Activated CD8-positive, alpha-beta T cell treated with anti-CD3 and anti-CD28 coated beads for 36 hours (primary cell): ENCODE measurements at regions of chr22 and their contacts with region 1.

Region 1: GRCh38 chr22:42614312-42615091 is at the start of gene POLDIP3:
- DNase-seq: peak; percentile 99
- ATAC-seq: peak; percentile 75
- H3K4me3 Mint-ChIP-seq: peak within 1 kb of the TSS; percentile 91
- H3K27ac Mint-ChIP-seq: peak within 1 kb of the TSS; percentile 100
- H3K4me1 Mint-ChIP-seq: peaks cover 49% of the 10 kb centered on the region
- H3K27me3 Mint-ChIP-seq: no peaks in the 10 kb centered on the region
- CTCF ChIP-seq: no peak
- total RNA-seq, gene POLDIP3: 70.2 to 71.1 TPM

Region 2: DNA sequence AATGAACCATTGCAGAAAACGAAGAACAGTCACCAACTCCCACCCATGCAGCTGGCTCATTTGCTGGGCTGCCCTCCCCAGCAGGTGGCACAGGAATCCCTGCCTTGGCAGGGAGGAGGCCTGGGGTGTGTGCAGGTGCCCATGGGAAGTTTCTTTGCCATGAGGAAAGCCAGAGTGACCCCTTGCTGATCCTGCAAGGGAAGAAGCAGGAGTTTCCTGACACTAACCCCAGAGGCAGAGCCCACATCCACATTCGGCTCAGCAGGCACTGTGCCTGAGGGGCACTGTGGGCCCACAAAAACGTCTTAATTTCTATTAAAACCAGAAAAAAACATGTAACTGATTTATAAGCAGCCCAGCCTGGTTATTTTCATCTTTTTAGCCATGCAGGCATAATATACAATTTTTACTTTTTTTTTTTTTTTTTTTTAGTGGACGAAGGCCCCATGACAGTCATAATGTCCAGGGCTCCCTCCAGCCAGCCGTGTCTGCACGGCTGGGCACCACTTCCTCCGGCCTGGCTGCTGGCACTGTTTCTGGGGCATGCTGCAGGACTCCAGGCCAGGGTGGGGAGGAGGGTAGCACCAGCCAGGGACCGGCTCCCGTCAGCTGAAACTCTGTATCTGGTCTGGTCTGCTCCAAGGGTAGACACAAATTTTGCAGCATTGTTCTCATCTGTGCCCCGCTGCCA is 86.1 kb before region 1 on chr22:
- CTCF ChIA-PET with region 1: no interaction called
- POLR2A ChIA-PET with region 1: no interaction called
- intact Hi-C with region 1: no loop called
- DNase-seq: no peak
- ATAC-seq: peak; percentile 10
- H3K4me3 Mint-ChIP-seq: no peak overlapping the region
- H3K27ac Mint-ChIP-seq: peak overlapping the region; percentile 8
- H3K4me1 Mint-ChIP-seq: peaks cover 18% of the 10 kb centered on the region
- H3K27me3 Mint-ChIP-seq: no peaks in the 10 kb centered on the region
- CTCF ChIP-seq: no peak

Region 3: GRCh38 chr22:42581762-42582716 is 32.5 kb before region 1 on chr22:
- CTCF ChIA-PET with region 1: interaction called, 4 read pairs
- POLR2A ChIA-PET with region 1: interaction called, 102 read pairs
- intact Hi-C with region 1: no loop called
- DNase-seq: peak; percentile 91
- ATAC-seq: peak; percentile 92
- H3K4me3 Mint-ChIP-seq: peak overlapping the region; percentile 95
- H3K27ac Mint-ChIP-seq: peak overlapping the region; percentile 95
- H3K4me1 Mint-ChIP-seq: peaks cover 9% of the 10 kb centered on the region
- H3K27me3 Mint-ChIP-seq: no peaks in the 10 kb centered on the region
- CTCF ChIP-seq: no peak

Region 4: DNA sequence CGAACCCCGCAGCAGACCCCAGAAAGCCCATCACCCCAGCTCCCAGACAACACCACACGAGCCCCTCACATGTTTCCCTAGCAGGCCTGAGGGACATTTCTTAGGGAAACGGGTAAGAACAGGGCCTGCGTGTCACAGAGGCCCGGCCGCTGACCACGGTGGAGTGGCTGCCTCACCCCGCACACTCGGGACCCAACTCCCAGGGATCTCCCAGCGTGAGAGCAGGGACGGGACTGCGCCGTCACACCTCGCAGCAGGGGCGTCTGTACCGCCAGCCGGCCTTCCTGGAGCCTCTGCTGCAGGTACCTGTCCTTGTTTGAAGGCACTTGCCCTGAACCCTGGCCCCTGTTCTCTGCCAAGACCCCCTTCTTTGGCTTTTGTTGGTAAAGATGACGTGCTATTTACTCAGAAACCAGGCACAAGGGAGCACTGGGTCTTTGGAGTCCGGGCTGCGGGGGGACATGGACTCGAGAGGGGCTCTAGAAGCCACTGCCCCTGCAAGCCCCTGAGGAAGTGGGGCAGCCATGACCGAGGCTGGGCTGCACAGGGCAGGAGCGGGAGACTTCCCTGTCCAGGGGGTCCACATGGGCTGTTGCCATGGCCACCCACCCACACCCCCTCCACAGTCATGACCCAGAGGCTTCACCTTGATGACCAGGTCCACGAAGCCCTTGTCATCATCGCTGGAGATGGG is 15.9 kb after region 1 on chr22:
- CTCF ChIA-PET with region 1: interaction called, 5 read pairs
- POLR2A ChIA-PET with region 1: interaction called, 64 read pairs
- intact Hi-C with region 1: no loop called
- DNase-seq: no peak
- ATAC-seq: no peak
- H3K4me3 Mint-ChIP-seq: no peak overlapping the region
- H3K27ac Mint-ChIP-seq: no peak overlapping the region
- H3K4me1 Mint-ChIP-seq: peaks cover under 1% of the 10 kb centered on the region
- H3K27me3 Mint-ChIP-seq: no peaks in the 10 kb centered on the region
- CTCF ChIP-seq: no peak

Region 5: GRCh38 chr22:42649246-42650099 is 35.0 kb after region 1 on chr22 and contains the start of gene CYB5R3:
- CTCF ChIA-PET with region 1: no interaction called
- POLR2A ChIA-PET with region 1: interaction called, 64 read pairs
- intact Hi-C with region 1: no loop called
- DNase-seq: peak; percentile 85
- ATAC-seq: peak; percentile 88
- H3K4me3 Mint-ChIP-seq: peak within 1 kb of the TSS; percentile 95
- H3K27ac Mint-ChIP-seq: peak within 1 kb of the TSS; percentile 95
- H3K4me1 Mint-ChIP-seq: peaks cover 28% of the 10 kb centered on the region
- H3K27me3 Mint-ChIP-seq: no peaks in the 10 kb centered on the region
- CTCF ChIP-seq: no peak
- total RNA-seq, gene CYB5R3: 64.2 to 64.3 TPM

Region 6: GRCh38 chr22:42662114-42663021 is 47.9 kb after region 1 on chr22:
- CTCF ChIA-PET with region 1: no interaction called
- POLR2A ChIA-PET with region 1: interaction called, 10 read pairs
- intact Hi-C with region 1: no loop called
- DNase-seq: peak; percentile 88
- ATAC-seq: peak; percentile 66
- H3K4me3 Mint-ChIP-seq: peak overlapping the region; percentile 57
- H3K27ac Mint-ChIP-seq: no peak overlapping the region
- H3K4me1 Mint-ChIP-seq: no peaks in the 10 kb centered on the region
- H3K27me3 Mint-ChIP-seq: no peaks in the 10 kb centered on the region
- CTCF ChIP-seq: peak; percentile 87

Region 7: GRCh38 chr22:42717197-42717928 is 102.9 kb after region 1 on chr22:
- CTCF ChIA-PET with region 1: no interaction called
- POLR2A ChIA-PET with region 1: no interaction called
- intact Hi-C with region 1: no loop called
- DNase-seq: no peak
- ATAC-seq: no peak
- H3K4me3 Mint-ChIP-seq: no peak overlapping the region
- H3K27ac Mint-ChIP-seq: no peak overlapping the region
- H3K4me1 Mint-ChIP-seq: peaks cover 14% of the 10 kb centered on the region
- H3K27me3 Mint-ChIP-seq: peaks cover 46% of the 10 kb centered on the region
- CTCF ChIP-seq: no peak